Activated CD8-positive, alpha-beta memory T cell treated with anti-CD3 and anti-CD28 coated beads, Interleukin-2, amount 10 ng/mL, durations not matched to agents 7 days and 5 days (primary cell): ENCODE measurements at regions of chr12 and their contacts with region 1.

Region 1: GRCh38 chr12:101323255-101323654 is 43.4 kb downstream of the UTP20 start:
- DNase-seq: no peak
- ATAC-seq: no peak
- H3K4me3 Mint-ChIP-seq: no peak overlapping the region
- H3K27ac Mint-ChIP-seq: no peak overlapping the region
- H3K4me1 Mint-ChIP-seq: no peaks in the 10 kb centered on the region
- H3K27me3 Mint-ChIP-seq: no peaks in the 10 kb centered on the region

Region 2: DNA sequence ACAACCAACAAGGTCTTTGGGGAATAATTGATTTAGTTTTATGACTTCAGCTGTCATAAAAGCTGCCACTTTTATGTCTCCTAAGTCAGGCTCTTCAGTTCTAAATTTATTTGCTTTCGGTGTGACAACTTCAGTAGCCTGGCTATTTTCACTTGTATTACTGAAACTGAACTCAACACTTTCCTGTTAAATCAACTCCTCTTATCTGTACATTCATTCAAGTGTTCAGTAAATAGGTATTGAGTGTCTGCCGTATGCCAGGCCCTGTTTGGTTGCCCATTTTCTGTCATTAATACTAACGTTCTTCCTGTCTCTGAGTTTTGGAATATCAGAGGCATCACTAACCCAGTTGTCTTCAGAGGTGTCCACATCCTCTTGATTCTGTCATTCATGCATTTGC is 35.9 kb before region 1 on chr12:
- CTCF ChIA-PET with region 1: no interaction called
- DNase-seq: no peak
- ATAC-seq: no peak
- H3K4me3 Mint-ChIP-seq: no peak overlapping the region
- H3K27ac Mint-ChIP-seq: no peak overlapping the region
- H3K4me1 Mint-ChIP-seq: peaks cover 7% of the 10 kb centered on the region
- H3K27me3 Mint-ChIP-seq: no peaks in the 10 kb centered on the region

Region 3: GRCh38 chr12:101336437-101336836 is 13.2 kb after region 1 on chr12:
- CTCF ChIA-PET with region 1: interaction called, 11 read pairs
- DNase-seq: no peak
- ATAC-seq: no peak
- H3K4me3 Mint-ChIP-seq: no peak overlapping the region
- H3K27ac Mint-ChIP-seq: no peak overlapping the region
- H3K4me1 Mint-ChIP-seq: no peaks in the 10 kb centered on the region
- H3K27me3 Mint-ChIP-seq: no peaks in the 10 kb centered on the region